Left cardiac atrium (tissue), 4 donors: ENCODE measurements at regions of chr9 and their contacts with region 1.

Region 1: DNA sequence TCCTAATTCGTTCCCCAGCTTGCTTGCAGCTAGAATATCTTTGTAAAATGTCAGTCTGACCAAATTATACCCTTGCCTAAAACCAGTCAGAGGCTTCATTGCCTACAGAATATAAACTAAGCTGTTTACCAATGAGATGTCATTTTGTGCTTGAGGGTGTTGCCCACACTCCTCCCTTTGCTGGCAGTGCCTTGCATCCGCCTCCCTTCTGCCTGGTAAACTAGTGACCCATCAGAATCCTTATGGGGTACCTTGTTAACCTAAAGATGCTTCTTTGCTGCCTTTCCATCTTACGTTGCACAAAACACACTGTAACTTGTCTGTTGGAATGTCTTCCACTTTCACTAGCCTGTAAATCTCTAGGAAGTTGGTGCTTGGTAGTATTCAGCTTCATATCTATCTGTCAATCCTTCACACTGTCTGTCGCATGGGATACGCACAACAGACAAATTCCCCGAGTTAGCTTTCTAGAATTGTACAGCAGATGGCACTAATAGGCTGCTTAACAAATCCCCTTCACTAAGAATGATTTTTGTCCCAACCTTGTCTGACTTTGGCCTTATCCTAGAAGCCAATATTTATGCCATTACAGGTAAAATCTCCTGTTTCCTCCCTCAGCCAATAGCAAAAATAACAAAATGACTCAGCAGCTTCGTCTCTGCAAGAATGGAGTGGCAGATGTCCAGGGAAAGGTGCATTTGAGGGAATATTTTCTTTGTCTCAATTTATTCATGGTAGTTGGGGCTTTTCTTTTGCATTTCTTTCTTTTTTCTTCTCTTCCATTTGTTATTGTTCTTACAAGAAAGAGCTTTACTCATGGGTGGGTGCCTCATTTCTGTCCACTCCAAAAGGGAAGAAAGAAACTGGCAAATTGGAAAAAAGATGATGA is 3.0 kb downstream of the NUDT2 start:
- DNase-seq: no peak
- ATAC-seq: no peak

Region 2: DNA sequence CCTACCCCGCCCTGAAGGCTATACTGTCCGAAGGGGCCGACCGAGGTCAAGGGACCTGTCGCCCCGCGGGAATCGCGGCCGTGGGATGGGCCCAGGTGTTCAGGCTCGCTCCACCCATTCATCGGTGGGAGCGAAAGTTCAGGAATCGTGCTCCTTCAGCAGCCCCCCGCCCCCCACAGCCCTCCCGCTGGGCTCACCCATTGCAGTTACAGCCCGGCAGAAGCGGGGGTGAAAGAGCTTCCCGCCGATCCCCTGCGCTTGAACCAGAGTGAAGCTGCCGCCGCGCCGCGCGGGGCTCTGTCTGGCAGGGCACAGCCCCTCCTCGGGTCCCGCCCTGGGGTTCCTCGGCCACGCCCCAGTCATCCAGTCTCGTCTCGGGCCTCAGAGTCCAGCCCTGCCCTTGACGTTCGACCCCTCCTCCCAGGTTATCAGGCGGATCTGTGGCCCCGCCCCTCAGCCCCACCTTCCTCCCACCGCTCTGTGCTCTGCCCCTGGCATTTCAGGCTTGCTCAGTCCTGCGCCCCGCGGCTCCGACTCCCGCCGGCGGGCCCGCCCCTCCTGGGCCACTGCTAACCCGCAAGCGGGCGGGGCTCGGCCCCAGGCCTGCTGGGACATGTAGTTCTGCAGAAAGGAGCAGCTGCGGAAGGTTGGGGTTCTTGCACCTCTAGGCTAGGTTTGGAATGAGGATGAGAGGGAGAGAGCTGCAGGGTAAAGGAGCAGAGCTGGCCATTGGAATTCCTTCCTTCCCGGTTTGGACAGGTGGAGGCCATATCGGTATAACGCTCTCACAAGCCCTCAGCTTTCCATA is 44.5 kb after region 1 on chr9 and contains the start of gene MYORG:
- intact Hi-C with region 1: loop called (anchors 1 to 5 kb)
- DNase-seq: peak; percentile 93
- ATAC-seq: peak; percentile 77 to 83
- total RNA-seq, gene MYORG: 5.5 to 6.0 TPM